Activated CD4-positive, alpha-beta T cell treated with anti-CD3 and anti-CD28 coated beads, Interleukin-2, amount 10 ng/mL, durations not matched to agents 7 days and 5 days (primary cell): ENCODE measurements at regions of chr9 and their contacts with region 1.

Region 1: DNA sequence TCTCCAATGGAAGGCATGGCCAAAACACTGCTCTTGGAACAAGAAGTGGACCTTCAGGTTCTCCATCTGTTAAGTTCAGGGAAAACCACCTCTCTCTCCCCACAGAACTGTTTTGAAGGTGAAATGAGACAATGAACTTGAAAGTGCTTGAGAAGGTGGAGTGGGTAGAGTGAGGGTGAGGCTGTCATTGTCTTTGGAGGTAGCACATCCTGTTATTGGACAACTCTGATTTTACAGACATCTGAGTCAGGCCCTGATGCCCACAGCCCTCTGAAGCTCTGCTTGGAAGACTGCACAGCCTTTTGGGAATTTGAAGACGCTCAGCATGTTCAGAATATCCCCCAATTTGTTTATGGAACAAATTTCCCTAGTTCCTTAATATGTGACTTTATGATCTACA is 27.6 kb upstream of the TEX48 start:
- DNase-seq: peak; percentile 40
- H3K4me3 Mint-ChIP-seq: no peak overlapping the region
- H3K27ac Mint-ChIP-seq: peak overlapping the region; percentile 87
- H3K4me1 Mint-ChIP-seq: peaks cover 69% of the 10 kb centered on the region
- H3K27me3 Mint-ChIP-seq: no peaks in the 10 kb centered on the region

Region 2: GRCh38 chr9:114696814-114697544 is 12.7 kb before region 1 on chr9:
- CTCF ChIA-PET with region 1: interaction called, 42 read pairs
- POLR2A ChIA-PET with region 1: no interaction called
- DNase-seq: peak; percentile 77
- H3K4me3 Mint-ChIP-seq: peak overlapping the region; percentile 33
- H3K27ac Mint-ChIP-seq: peak overlapping the region; percentile 95
- H3K4me1 Mint-ChIP-seq: peaks cover 93% of the 10 kb centered on the region
- H3K27me3 Mint-ChIP-seq: no peaks in the 10 kb centered on the region

Region 3: DNA sequence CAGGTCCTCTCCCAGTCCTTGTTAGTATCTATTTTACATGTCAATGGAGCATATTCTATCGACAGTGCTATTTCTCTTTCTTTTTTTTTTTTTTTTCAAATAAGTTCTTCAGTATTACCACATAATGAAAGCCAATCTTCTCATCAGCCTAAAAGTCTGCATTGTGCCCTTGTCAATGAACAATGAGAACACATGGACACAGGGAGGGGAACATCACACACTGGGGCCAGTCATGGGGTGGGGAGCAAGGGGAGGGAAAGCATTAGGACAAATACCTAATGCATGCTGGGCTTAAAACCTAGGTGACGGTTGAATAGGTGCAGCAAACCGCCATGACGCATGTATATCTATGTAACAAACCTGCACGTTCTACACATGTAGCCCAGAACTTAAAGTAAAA is 20.1 kb after region 1 on chr9:
- CTCF ChIA-PET with region 1: no interaction called
- POLR2A ChIA-PET with region 1: no interaction called
- DNase-seq: no peak
- H3K4me3 Mint-ChIP-seq: no peak overlapping the region
- H3K27ac Mint-ChIP-seq: no peak overlapping the region
- H3K4me1 Mint-ChIP-seq: peaks cover 35% of the 10 kb centered on the region
- H3K27me3 Mint-ChIP-seq: no peaks in the 10 kb centered on the region